ENCODE measurements at regions of chr14 and their contacts with region 1.

Region 1: GRCh38 chr14:74762917-74763802 is at the start of gene YLPM1:
- DNase-seq: peak; percentile 94
- H3K4me3 Mint-ChIP-seq: peak within 1 kb of the TSS; percentile 94
- H3K27ac Mint-ChIP-seq: peak within 1 kb of the TSS; percentile 92
- H3K4me1 Mint-ChIP-seq: peaks cover 48% of the 10 kb centered on the region
- H3K27me3 Mint-ChIP-seq: no peaks in the 10 kb centered on the region
- total RNA-seq, gene YLPM1: 46.5 to 47.0 TPM

Region 2: GRCh38 chr14:73700325-73700724 is 1062.8 kb before region 1 on chr14:
- CTCF ChIA-PET with region 1: no interaction called
- intact Hi-C with region 1: no loop called
- DNase-seq: no peak
- H3K4me3 Mint-ChIP-seq: no peak overlapping the region
- H3K27ac Mint-ChIP-seq: peak overlapping the region; percentile 65
- H3K4me1 Mint-ChIP-seq: peaks cover 44% of the 10 kb centered on the region
- H3K27me3 Mint-ChIP-seq: no peaks in the 10 kb centered on the region

Region 3: DNA sequence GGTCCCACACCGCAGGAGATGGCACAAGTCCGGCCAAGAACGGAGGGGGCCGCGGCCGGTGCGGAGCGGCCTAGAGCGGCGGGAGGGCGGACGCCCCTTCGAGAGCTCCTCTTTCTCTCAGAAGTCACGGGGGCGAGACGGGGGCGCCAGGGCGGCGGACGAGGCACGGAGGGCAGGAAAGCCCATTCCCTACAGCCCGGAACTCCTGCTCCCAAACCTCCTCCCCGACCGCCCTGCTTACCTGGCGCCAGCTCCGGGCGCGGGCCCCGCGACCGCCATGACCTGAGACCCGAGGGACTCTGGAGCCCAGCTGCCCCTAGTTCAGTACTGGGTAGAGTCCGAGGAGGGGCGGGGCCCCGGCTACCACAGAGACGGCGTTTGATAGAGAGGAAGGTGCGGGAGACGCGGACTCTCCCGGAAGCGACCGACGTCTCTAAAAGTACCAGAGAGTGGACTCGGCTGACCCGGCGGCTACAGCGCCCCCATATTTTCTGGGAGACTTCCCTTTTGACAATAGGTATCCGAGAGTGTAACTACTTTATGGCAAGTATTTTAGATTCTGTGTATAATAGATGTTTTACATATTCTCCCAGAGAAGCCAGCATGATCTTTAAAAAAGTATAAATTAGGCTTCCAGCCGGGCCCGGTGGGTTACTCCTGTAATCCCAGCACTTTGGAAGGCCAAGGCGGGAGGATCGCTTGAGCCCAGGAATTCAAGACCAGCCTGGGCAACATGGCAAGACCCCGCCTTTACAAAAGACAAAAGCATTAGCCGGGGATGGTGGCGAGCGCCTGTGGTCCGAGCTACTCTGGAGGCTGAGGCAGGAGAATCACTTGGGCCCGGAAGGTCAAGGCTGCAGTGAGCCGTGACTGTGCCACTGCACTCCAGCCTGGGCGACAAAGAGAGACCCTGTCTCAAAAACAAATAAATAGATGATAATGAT is 460.3 kb before region 1 on chr14 and contains the start of gene ABCD4:
- CTCF ChIA-PET with region 1: no interaction called
- intact Hi-C with region 1: loop called (anchors 2 kb)
- DNase-seq: peak; percentile 92
- H3K4me3 Mint-ChIP-seq: peak within 1 kb of the TSS; percentile 97
- H3K27ac Mint-ChIP-seq: peak within 1 kb of the TSS; percentile 92
- H3K4me1 Mint-ChIP-seq: peaks cover 26% of the 10 kb centered on the region
- H3K27me3 Mint-ChIP-seq: no peaks in the 10 kb centered on the region
- total RNA-seq, gene ABCD4: 41.4 to 43.9 TPM

Region 4: GRCh38 chr14:74599321-74599761 is 163.8 kb before region 1 on chr14:
- CTCF ChIA-PET with region 1: no interaction called
- intact Hi-C with region 1: no loop called
- DNase-seq: no peak
- H3K4me3 Mint-ChIP-seq: no peak overlapping the region
- H3K27ac Mint-ChIP-seq: no peak overlapping the region
- H3K4me1 Mint-ChIP-seq: no peaks in the 10 kb centered on the region
- H3K27me3 Mint-ChIP-seq: no peaks in the 10 kb centered on the region

Region 5: DNA sequence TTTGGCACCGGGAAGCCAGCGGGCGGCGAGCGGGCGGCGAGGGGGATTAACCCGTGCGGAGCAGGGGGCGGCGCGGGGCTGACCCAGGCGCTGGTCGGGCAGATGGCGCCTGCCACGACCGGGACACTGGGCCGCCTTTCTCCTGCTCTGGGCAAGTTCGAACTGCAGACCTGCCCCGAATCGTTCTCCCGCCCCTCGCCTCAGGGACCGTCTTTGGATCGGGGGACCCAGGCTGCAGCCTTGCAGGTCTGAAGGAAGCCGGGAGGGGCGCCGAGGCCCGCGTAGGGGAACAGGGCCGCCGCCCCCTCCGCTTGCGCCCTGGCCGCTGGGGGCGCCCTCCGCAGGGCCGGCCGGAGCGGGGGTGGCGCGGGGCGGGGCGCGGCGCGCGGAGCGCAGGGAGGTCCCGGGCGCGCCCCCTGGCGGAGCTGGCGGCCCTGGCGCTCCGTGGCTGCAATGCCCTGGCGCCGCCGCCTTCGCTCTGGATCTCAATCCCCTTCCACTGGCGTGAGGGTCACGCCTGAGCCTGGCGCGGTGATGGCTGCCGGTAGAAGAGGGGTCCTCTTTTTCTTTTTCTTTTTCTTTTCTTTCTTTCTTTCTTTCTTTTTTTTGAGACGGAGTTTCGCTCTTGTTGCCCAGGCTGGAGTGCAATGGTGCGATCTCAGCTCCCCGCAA is 150.7 kb before region 1 on chr14:
- CTCF ChIA-PET with region 1: interaction called, 5 read pairs
- intact Hi-C with region 1: loop called (anchors 2 kb)
- DNase-seq: peak; percentile 77
- H3K4me3 Mint-ChIP-seq: peak overlapping the region; percentile 62
- H3K27ac Mint-ChIP-seq: no peak overlapping the region
- H3K4me1 Mint-ChIP-seq: peaks cover 40% of the 10 kb centered on the region
- H3K27me3 Mint-ChIP-seq: peaks cover 14% of the 10 kb centered on the region

Region 6: DNA sequence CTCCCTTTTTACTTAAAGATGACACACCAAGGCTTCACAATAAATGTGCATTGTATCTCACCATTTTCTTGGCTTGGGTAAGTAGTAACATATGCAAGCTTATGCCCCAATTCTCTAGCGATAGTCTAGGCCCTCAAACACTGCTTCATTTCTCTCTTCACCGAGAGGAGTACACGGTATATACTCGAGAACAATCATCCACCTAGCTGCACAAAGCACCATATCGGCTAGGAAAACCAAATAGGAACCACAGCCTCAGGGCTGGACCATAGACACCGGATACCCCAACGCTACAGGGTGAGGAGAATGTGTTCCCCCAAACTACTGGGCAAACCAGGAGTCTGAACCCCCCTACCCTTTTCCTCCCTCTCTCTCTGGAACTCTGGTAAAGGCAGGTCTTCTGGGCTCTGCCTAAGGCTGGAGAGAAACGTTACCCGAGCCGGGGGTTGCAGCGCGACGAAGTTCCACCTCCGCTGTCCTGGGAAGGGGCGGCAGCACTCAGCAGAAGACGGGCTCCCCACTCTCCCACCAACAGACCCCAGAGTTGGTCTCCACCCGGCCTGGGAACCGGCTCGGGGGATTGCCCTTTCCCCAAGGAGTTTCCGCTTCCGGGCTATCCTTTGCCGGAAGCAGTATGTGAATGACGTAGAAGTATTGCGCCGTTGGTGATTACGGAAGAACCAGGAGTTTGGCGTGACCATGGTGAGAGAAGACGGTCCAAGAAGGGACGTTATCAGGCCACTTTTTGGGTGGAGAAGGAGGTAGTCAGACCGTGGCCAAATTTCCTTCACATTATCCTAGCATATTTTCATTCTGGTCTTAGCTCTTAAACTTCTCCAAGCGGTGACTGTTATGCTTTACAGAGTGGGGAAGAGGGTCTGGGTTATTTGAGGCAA is 50.4 kb before region 1 on chr14 and contains the starts of genes AREL1 and FCF1:
- CTCF ChIA-PET with region 1: no interaction called
- intact Hi-C with region 1: loop called (anchors 1 kb)
- DNase-seq: peak; percentile 93
- H3K4me3 Mint-ChIP-seq: peak within 1 kb of the TSS; percentile 97
- H3K27ac Mint-ChIP-seq: peak within 1 kb of the TSS; percentile 90
- H3K4me1 Mint-ChIP-seq: peaks cover 47% of the 10 kb centered on the region
- H3K27me3 Mint-ChIP-seq: no peaks in the 10 kb centered on the region
- total RNA-seq, gene AREL1: 29.1 to 29.5 TPM
- total RNA-seq, gene FCF1: 83.8 to 87.5 TPM

Region 7: GRCh38 chr14:74793506-74794168 is 30.5 kb after region 1 on chr14:
- CTCF ChIA-PET with region 1: interaction called, 5 read pairs
- intact Hi-C with region 1: loop called (anchors 1 kb)
- DNase-seq: peak; percentile 31
- H3K4me3 Mint-ChIP-seq: peak overlapping the region; percentile 60
- H3K27ac Mint-ChIP-seq: peak overlapping the region; percentile 81
- H3K4me1 Mint-ChIP-seq: peaks cover 40% of the 10 kb centered on the region
- H3K27me3 Mint-ChIP-seq: no peaks in the 10 kb centered on the region

Region 8: DNA sequence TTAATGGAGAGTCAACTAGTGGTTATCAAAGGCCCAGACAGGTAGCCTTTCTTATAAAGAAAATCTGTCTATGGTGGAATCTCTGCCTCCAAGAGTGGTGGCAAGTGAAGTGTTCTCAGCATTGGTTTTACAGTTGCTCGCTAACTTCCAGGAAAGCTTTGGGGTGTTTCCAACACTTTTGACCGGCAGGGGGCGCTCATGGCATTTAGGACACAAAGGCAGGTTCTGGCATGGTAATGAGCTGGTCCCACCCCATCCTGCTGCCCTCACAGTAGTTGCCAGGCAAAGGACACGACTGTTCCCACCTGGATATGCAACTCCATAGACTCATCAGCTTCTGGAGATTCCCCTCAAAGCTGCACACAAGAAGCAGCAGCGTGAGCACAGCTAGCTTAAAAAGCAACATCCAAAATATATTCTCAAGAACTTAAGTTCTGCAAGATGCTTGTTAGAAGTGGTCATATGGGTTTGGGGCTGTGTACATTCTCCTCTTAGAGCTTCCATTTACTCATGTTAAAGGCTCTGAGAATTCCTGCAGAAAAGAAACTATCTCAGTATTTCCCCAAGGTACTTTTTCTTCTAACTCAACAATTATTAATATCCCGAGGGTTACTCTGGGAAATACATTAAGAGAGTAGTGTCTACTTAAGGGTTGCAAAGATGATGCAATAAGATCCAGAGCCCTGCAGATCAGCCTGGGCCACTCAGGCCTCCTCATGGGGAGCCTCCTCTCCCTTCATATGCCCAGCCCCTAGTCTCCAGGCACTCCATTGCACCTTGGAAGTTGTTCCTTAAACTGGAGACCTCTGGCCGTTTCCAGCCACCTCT is 98.0 kb after region 1 on chr14:
- CTCF ChIA-PET with region 1: interaction called, 10 read pairs
- intact Hi-C with region 1: no loop called
- DNase-seq: peak; percentile 97
- H3K4me3 Mint-ChIP-seq: no peak overlapping the region
- H3K27ac Mint-ChIP-seq: no peak overlapping the region
- H3K4me1 Mint-ChIP-seq: peaks cover 2% of the 10 kb centered on the region
- H3K27me3 Mint-ChIP-seq: no peaks in the 10 kb centered on the region

Region 9: GRCh38 chr14:75094896-75095295 is 331.7 kb after region 1 on chr14:
- CTCF ChIA-PET with region 1: no interaction called
- intact Hi-C with region 1: no loop called
- DNase-seq: no peak
- H3K4me3 Mint-ChIP-seq: no peak overlapping the region
- H3K27ac Mint-ChIP-seq: no peak overlapping the region
- H3K4me1 Mint-ChIP-seq: no peaks in the 10 kb centered on the region
- H3K27me3 Mint-ChIP-seq: no peaks in the 10 kb centered on the region

Region 10: GRCh38 chr14:75560962-75561432 is 797.8 kb after region 1 on chr14:
- CTCF ChIA-PET with region 1: no interaction called
- intact Hi-C with region 1: loop called (anchors 10 kb)
- DNase-seq: peak; percentile 72
- H3K4me3 Mint-ChIP-seq: no peak overlapping the region
- H3K27ac Mint-ChIP-seq: peak overlapping the region; percentile 53
- H3K4me1 Mint-ChIP-seq: peaks cover 67% of the 10 kb centered on the region
- H3K27me3 Mint-ChIP-seq: no peaks in the 10 kb centered on the region